HAP-1 (cell line): ENCODE measurements at regions of chr15 and their contacts with region 1.

Region 1: GRCh38 chr15:89728254-89728653 is 22.8 kb downstream of the MESP1 start:
- DNase-seq: no peak
- H3K4me3 ChIP-seq: no peak overlapping the region
- H3K4me1 ChIP-seq: no peaks in the 10 kb centered on the region
- H3K27me3 ChIP-seq: 0 out of 2 replicates have a peak, but pooled peaks cover 2% of the 10 kb centered on the region

Region 2: DNA sequence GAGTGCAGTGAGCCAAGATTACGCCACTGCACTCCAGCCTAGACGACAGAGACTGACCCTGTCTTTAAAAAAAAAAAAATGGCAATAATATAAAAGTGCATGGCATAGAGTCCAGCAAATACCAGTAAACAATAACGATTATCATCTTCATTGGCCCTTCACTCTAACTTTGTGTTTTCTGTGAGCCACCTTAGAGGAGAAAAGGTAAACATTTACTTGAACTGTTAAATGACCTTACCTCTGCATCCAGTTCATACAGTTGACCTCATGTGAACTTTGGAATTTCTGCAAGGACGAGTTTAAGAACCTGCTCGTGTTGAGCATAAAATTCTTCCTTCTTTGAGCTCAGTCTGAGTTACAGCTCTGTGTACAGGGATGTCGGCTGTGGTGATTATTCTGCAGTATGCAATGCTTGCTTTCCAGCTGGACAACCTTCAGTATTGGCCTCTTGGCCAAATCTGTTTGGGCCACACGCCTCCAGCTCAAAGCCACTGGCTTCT is 563.5 kb before region 1 on chr15:
- in situ Hi-C with region 1: no loop called
- DNase-seq: no peak
- H3K4me3 ChIP-seq: no peak overlapping the region
- H3K4me1 ChIP-seq: peaks cover 38% of the 10 kb centered on the region
- H3K27me3 ChIP-seq: no peaks in the 10 kb centered on the region

Region 3: DNA sequence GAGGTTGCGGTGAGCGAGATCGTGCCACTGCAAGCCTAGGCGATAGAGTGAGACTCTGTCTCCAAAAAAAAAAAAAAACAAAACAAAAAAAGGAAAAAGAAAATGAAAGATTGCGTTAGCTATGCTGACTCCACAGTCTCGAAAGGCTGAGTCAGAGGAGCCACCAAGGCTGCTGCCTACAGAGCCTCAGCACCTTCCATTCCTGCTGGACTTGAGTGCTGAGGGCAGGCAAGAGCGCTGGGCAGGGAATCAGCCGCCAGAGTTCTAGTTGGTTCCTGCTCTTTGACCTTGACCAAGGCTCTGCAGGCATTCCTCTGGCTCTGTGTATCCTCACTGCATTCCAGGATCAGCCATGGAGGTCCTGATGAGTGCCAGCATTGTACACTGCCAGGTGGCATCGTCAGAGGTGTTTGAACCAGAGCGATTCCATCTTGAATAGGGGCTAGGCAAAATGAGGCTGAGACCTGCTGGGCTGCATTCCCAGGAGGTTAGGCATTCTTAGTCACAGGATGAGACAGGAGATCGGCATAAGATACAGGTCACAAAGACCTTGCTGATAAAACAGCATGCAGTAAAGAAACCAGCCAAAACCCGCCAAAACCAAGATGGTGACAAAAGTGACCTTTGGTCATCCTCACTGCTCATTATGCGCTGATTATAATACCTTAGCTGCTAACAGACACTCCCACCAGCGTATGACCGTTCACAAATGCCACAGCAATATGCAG is 53.8 kb after region 1 on chr15:
- in situ Hi-C with region 1: loop called (anchors 10 kb)
- DNase-seq: no peak
- H3K4me3 ChIP-seq: no peak overlapping the region
- H3K4me1 ChIP-seq: no peaks in the 10 kb centered on the region
- H3K27me3 ChIP-seq: no peaks in the 10 kb centered on the region